ENCODE measurements at regions of chr15 and their contacts with region 1.

Region 1: GRCh38 chr15:27358751-27359434 is 387.9 kb downstream of the GABRG3 start:
- DNase-seq: peak; percentile 5
- ATAC-seq: peak; percentile 71
- H3K4me3 ChIP-seq: no peak overlapping the region
- H3K27ac ChIP-seq: no peak overlapping the region
- H3K4me1 ChIP-seq: no peaks in the 10 kb centered on the region
- H3K27me3 ChIP-seq: no peaks in the 10 kb centered on the region
- CTCF ChIP-seq: peak; percentile 76
- EP300 ChIP-seq: no peak
- POLR2A ChIP-seq: no peak
- RAD21 ChIP-seq: peak; percentile 49; the same call in 1 of the 2 replicates

Region 2: DNA sequence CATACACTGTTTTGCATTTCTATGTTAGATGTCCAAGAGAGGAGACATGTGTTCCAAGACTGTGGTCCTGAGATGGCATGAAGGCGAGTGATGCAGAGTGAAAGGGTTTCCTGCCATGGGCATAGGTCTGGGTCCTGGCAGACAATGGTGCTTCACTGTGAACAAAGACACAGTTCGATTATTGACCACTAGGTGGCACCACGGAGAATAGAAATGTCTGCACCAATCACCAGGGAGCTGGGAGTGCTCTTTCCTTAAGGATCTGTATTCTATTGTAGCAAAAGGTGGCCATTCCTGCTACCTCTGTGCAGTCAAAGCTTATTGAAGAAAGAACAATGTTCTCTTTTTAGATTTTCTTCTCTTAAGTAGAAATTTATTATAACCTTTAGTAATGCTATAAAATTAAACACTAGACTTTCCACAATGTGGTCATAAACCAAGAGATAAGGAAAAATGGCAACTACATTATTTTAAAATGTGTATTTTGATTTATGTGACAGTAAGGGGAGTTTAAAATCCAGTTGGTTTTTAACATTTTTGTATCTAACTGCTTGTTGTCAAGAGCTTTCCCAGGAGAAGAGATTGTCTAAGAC is 299.2 kb before region 1 on chr15:
- CTCF ChIA-PET with region 1: interaction called, 9 read pairs
- POLR2A ChIA-PET with region 1: no interaction called
- in situ Hi-C with region 1: loop called (anchors 10 kb)
- intact Hi-C with region 1: no loop called
- DNase-seq: peak; percentile 46
- ATAC-seq: peak; percentile 86
- H3K4me3 ChIP-seq: no peak overlapping the region
- H3K27ac ChIP-seq: no peak overlapping the region
- H3K4me1 ChIP-seq: no peaks in the 10 kb centered on the region
- H3K27me3 ChIP-seq: peaks cover 0 to 3% of the 10 kb centered on the region in 2 experiments; a peak in 1 of 5 replicates
- CTCF ChIP-seq: peak; percentile 55
- EP300 ChIP-seq: no peak
- POLR2A ChIP-seq: no peak
- RAD21 ChIP-seq: no peak

Region 3: GRCh38 chr15:27238209-27238608 is 120.7 kb before region 1 on chr15:
- CTCF ChIA-PET with region 1: no interaction called
- POLR2A ChIA-PET with region 1: no interaction called
- in situ Hi-C with region 1: no loop called
- intact Hi-C with region 1: loop called (anchors 2 kb)
- DNase-seq: no peak
- ATAC-seq: peak; percentile 62; the same call in 2 of the 3 replicates
- H3K4me3 ChIP-seq: no peak overlapping the region
- H3K27ac ChIP-seq: no peak overlapping the region
- H3K4me1 ChIP-seq: no peaks in the 10 kb centered on the region
- H3K27me3 ChIP-seq: no peaks in the 10 kb centered on the region
- CTCF ChIP-seq: peak; percentile 32; the same call in 1 of the 2 replicates
- EP300 ChIP-seq: no peak
- POLR2A ChIP-seq: no peak
- RAD21 ChIP-seq: no peak